PC-3 (cell line): ENCODE measurements at regions of chr5 and their contacts with region 1.

Region 1: DNA sequence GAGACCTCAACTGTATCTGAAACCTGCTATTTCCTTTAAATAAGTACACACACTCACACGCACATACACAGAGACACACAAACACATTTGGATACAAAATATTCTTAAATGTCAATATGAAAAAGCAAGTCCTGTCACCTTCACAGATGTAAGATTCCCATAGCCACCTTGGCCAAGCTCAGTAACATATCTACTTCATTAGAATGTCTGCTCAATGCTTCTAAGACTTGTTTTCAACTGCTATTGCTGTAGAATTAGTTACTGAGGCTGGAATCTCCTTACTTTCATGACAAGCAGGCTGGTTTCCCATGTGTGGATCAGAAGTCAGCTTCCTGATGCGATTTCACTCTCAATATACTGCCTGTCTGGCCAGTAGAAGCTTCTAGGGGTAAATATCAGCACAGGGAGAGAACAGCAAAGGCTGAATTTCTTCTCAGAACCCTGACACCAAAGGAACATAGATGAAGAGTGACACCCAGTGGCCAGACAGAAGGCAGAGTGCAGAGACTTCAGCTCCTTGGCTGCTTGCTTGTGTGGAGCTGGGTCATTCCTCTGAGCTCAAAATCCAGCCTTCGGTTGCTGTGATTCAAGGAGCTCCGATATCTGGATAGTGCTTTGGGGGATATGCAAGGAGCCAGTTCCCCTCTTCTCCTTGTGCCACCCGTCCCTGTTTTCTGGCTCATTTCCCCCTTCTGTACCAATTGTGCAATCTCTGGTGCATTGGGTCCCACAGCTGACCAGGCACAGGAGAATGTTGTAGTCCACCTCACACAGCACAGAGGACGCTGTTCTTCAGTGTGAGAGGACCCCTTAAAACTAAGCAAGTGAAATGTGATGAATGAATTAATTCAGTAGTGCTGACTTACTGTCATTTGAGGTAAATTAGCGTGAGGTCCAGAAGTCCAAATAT is 26.6 kb upstream of the ABLIM3 start:
- DNase-seq: peak; percentile 99
- ATAC-seq: peak; percentile 91
- H3K4me3 ChIP-seq: peak overlapping the region; percentile 5; the same call in 1 of the 2 replicates
- H3K27ac ChIP-seq: peak overlapping the region; percentile 53
- H3K4me1 ChIP-seq: peaks cover 55% of the 10 kb centered on the region
- H3K27me3 ChIP-seq: no peaks in the 10 kb centered on the region
- CTCF ChIP-seq: peak; percentile 100

Region 2: GRCh38 chr5:148740966-148741742 is 373.5 kb before region 1 on chr5:
- CTCF ChIA-PET with region 1: interaction called, 44 read pairs
- POLR2A ChIA-PET with region 1: no interaction called
- intact Hi-C with region 1: loop called (anchors 1 kb)
- DNase-seq: peak; percentile 96
- ATAC-seq: peak; percentile 92
- H3K4me3 ChIP-seq: peak overlapping the region; percentile 4; the same call in 1 of the 2 replicates
- H3K27ac ChIP-seq: no peak overlapping the region
- H3K4me1 ChIP-seq: peaks cover 5% of the 10 kb centered on the region
- H3K27me3 ChIP-seq: no peaks in the 10 kb centered on the region
- CTCF ChIP-seq: peak; percentile 99

Region 3: DNA sequence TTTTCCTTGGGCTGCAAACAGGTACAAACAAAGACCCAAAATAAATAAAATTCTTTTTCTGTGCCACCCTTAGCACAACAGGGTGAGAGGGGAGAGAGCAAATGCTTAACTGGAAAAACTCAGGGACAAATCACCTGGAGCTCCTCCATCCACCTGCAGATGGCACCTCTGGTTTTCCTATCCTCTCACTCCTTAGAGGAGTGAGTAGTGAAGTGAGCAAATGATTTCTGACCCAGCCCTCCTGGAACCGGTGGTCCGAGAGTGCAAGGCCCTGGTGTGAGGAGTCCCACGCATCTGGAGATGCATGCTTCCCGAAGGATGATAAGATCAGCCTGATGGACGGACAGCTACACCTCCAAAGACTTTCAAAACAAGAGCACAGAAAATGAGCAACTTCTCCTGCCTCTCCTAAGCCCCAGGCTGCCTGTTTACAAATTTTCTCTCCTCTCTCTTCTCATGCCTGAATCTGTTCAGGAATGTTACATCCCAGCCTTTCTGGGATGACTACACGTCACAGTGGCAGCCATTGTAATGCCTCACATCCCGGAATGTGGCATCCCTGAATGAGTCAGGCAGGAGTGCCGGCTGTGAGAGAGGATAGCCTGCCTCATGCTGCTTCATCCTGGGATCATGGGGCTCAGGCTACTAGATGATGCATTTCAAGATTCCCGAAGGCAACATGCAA is 201.8 kb before region 1 on chr5:
- CTCF ChIA-PET with region 1: interaction called, 12 read pairs
- POLR2A ChIA-PET with region 1: no interaction called
- intact Hi-C with region 1: loop called (anchors 1 kb)
- DNase-seq: peak; percentile 100
- ATAC-seq: peak; percentile 62
- H3K4me3 ChIP-seq: peak overlapping the region; percentile 19; the same call in 1 of the 2 replicates
- H3K27ac ChIP-seq: peak overlapping the region; percentile 88
- H3K4me1 ChIP-seq: peaks cover 80% of the 10 kb centered on the region
- H3K27me3 ChIP-seq: no peaks in the 10 kb centered on the region
- CTCF ChIP-seq: peak; percentile 97

Region 4: GRCh38 chr5:149011074-149011476 is 103.6 kb before region 1 on chr5:
- CTCF ChIA-PET with region 1: interaction called, 16 read pairs
- POLR2A ChIA-PET with region 1: interaction called, 4 read pairs
- intact Hi-C with region 1: no loop called
- DNase-seq: peak; percentile 100
- ATAC-seq: peak; percentile 88
- H3K4me3 ChIP-seq: no peak overlapping the region
- H3K27ac ChIP-seq: peak overlapping the region; percentile 52
- H3K4me1 ChIP-seq: peaks cover 54% of the 10 kb centered on the region
- H3K27me3 ChIP-seq: no peaks in the 10 kb centered on the region
- CTCF ChIP-seq: peak; percentile 28

Region 5: DNA sequence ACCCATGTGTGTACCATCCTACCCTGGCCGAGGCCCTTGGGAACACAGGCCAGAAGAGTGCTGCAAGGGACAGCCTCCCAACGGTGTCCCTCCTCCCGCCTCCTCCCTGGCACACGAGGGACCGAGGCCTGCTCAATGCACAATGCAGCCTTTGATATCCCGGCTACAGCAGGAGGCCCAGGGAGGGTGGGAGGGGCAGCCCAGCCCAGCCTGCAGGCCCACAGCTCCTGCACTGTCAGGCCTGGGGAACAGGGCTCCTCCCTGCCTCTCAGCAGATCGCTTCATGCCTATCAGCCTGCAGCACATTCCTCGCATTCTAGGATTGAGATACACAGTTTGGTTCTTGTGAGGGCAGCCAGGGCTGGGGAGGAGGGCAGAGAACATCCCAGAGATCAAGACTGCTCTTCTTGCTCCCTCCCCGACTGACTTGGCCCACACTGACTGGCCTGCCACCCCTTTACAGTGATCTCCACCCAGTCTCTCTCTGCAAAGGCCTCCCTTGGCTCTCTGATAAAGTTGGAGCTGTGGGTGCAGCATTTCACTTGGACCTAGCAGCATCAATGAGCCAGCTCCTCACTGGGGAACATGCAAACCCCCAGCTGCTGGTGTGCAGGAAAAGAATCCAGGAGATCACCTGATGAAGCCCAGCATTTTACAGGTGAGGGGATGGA is 51.5 kb before region 1 on chr5 and contains the start of gene SH3TC2:
- CTCF ChIA-PET with region 1: interaction called, 10 read pairs
- POLR2A ChIA-PET with region 1: no interaction called
- intact Hi-C with region 1: loop called (anchors 1 kb)
- DNase-seq: peak; percentile 96
- ATAC-seq: peak; percentile 76
- H3K4me3 ChIP-seq: peak within 1 kb of the TSS; percentile 47
- H3K27ac ChIP-seq: peak within 1 kb of the TSS; percentile 95
- H3K4me1 ChIP-seq: peaks cover 58% of the 10 kb centered on the region
- H3K27me3 ChIP-seq: no peaks in the 10 kb centered on the region
- CTCF ChIP-seq: no peak
- total RNA-seq, gene SH3TC2: 32.0 and 40.0 TPM in 2 replicates

Region 6: GRCh38 chr5:149268928-149269557 is 154.4 kb after region 1 on chr5:
- CTCF ChIA-PET with region 1: interaction called, 14 read pairs
- POLR2A ChIA-PET with region 1: no interaction called
- intact Hi-C with region 1: no loop called
- DNase-seq: peak; percentile 96
- ATAC-seq: 0 out of 2 replicates have a peak, but pooled peaks have one; percentile 3
- H3K4me3 ChIP-seq: no peak overlapping the region
- H3K27ac ChIP-seq: no peak overlapping the region
- H3K4me1 ChIP-seq: peaks cover 28% of the 10 kb centered on the region
- H3K27me3 ChIP-seq: no peaks in the 10 kb centered on the region
- CTCF ChIP-seq: peak; percentile 99